ENCODE measurements at regions of chr1 and their contacts with region 1.

Region 1: DNA sequence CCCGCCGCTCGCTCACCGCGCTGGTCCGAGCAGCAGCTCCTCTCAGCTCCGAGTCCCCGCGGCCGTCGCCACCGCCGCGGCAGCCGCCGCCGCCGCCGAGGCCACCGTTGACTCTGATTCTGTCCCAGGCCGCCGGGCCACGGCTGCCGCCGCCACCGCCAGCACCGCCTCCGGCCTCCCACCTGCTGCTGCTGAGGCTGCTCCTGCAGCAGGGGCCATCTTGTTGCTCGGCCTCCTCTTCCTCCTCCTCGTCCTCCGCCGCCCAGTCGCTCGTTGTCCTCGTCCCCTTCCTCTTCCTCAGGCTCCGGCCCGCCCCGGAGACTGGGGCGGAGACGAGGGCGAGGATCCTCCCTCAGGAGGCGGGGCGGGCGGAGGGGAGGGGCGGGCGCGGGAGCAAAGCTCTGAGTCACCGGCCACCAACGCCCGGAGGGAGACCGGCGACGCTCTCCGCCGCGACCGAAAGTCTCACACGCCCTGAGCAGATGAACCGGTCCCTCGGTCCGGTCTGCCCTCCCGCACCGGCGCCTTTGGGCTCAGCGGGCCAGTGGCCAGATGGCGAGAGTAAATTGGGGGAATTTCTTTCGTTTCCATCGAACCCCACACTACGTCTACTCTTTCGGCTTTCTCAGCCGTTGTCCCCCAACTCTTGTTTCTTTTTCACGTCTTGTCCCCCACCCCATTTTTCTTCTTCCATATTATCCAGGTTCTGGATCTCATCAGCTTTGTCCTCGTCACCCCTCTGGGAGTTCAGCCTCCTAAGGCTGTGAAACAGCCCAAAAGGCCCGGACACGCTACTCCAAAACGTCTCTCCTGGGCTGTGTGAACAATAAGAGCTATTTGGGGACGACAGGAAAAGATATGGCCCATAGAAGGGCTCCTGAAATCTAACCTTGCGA is at the start of gene RC3H1:
- DNase-seq: peak; percentile 89 to 90
- ATAC-seq: peak; percentile 81 to 89
- H3K4me3 ChIP-seq: peak within 1 kb of the TSS; percentile 73 to 88 (median 82)
- H3K27ac ChIP-seq: peak within 1 kb of the TSS; percentile 94 to 98 (median 95)
- H3K4me1 ChIP-seq: peaks cover 29 to 44% of the 10 kb centered on the region in 2 donors
- H3K27me3 ChIP-seq: no peaks in the 10 kb centered on the region
- CTCF ChIP-seq: no peak
- POLR2A ChIP-seq: peak; percentile 91 to 94
- total RNA-seq, gene RC3H1: 17.6 to 88.9 (median 37.8) TPM

Region 2: GRCh38 chr1:173429471-173430402 is 592.6 kb before region 1 on chr1:
- in situ Hi-C with region 1: no loop called
- intact Hi-C with region 1: loop called (anchors 10 kb)
- DNase-seq: peak; percentile 63 to 75
- ATAC-seq: peak; percentile 76 to 80
- H3K4me3 ChIP-seq: peak overlapping the region; percentile 10 to 46 (median 40)
- H3K27ac ChIP-seq: peak overlapping the region; percentile 76 to 83 (median 82)
- H3K4me1 ChIP-seq: peaks cover 28 to 29% of the 10 kb centered on the region in 2 donors
- H3K27me3 ChIP-seq: no peaks in the 10 kb centered on the region
- CTCF ChIP-seq: peak; percentile 9 to 72 (median 58)
- POLR2A ChIP-seq: peak; percentile 11 to 18

Region 3: DNA sequence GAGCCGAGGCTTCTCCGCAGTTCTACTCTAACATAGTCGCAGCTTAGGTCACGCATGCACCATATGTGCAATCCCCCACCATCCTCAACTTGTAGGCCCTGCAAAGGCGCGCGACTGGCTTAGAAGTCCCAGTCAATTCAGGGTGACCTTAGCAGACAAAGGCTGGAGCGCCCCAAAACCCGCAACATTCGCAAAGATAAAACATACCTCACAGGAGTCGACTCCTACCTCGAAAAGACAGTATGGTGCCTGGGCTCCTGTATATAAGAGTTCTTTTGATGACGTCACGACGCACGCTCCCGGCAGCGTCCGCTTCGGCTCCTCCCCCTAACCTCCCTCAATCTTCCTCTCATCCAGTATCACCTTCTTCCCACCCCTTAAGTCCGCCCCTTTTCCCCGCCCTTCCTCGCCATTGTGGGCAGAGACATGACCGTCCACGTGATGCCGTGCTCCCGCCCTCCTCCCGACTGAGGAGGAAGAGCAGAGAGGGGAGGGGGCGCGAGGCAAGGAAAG is 154.5 kb before region 1 on chr1 and contains the start of gene GAS5:
- in situ Hi-C with region 1: no loop called
- intact Hi-C with region 1: loop called (anchors 1 kb)
- DNase-seq: peak; percentile 99
- ATAC-seq: peak; percentile 93 to 97
- H3K4me3 ChIP-seq: peak within 1 kb of the TSS; percentile 63 to 97 (median 85)
- H3K27ac ChIP-seq: peak within 1 kb of the TSS; percentile 90 to 96 (median 95)
- H3K4me1 ChIP-seq: peaks cover 27 to 30% of the 10 kb centered on the region in 2 donors
- H3K27me3 ChIP-seq: no peaks in the 10 kb centered on the region
- CTCF ChIP-seq: peak in 1 of 5 experiments; percentile 13
- POLR2A ChIP-seq: peak; percentile 93 to 97
- total RNA-seq, gene GAS5: 91.9 to 138 (median 98.4) TPM

Region 4: GRCh38 chr1:174060090-174060489 is 37.8 kb after region 1 on chr1:
- in situ Hi-C with region 1: no loop called
- intact Hi-C with region 1: no loop called
- DNase-seq: no peak
- ATAC-seq: no peak
- H3K4me3 ChIP-seq: no peak overlapping the region
- H3K27ac ChIP-seq: no peak overlapping the region
- H3K4me1 ChIP-seq: no peaks in the 10 kb centered on the region
- H3K27me3 ChIP-seq: no peaks in the 10 kb centered on the region
- CTCF ChIP-seq: no peak
- POLR2A ChIP-seq: no peak

Region 5: GRCh38 chr1:174159252-174160108 is 137.2 kb after region 1 on chr1 and contains the start of gene RABGAP1L:
- in situ Hi-C with region 1: no loop called
- intact Hi-C with region 1: loop called (anchors 1 kb)
- DNase-seq: peak; percentile 88 to 90
- ATAC-seq: peak; percentile 94
- H3K4me3 ChIP-seq: peak within 1 kb of the TSS; percentile 90 to 100 (median 93)
- H3K27ac ChIP-seq: peak within 1 kb of the TSS; percentile 92 to 98 (median 94)
- H3K4me1 ChIP-seq: peaks cover 3 to 11% of the 10 kb centered on the region in 2 donors
- H3K27me3 ChIP-seq: no peaks in the 10 kb centered on the region
- CTCF ChIP-seq: peak in 2 of 5 experiments; percentile 9 to 17
- POLR2A ChIP-seq: peak; percentile 73 to 79
- total RNA-seq, gene RABGAP1L: 8.8 to 22.2 (median 14.9) TPM

Region 6: DNA sequence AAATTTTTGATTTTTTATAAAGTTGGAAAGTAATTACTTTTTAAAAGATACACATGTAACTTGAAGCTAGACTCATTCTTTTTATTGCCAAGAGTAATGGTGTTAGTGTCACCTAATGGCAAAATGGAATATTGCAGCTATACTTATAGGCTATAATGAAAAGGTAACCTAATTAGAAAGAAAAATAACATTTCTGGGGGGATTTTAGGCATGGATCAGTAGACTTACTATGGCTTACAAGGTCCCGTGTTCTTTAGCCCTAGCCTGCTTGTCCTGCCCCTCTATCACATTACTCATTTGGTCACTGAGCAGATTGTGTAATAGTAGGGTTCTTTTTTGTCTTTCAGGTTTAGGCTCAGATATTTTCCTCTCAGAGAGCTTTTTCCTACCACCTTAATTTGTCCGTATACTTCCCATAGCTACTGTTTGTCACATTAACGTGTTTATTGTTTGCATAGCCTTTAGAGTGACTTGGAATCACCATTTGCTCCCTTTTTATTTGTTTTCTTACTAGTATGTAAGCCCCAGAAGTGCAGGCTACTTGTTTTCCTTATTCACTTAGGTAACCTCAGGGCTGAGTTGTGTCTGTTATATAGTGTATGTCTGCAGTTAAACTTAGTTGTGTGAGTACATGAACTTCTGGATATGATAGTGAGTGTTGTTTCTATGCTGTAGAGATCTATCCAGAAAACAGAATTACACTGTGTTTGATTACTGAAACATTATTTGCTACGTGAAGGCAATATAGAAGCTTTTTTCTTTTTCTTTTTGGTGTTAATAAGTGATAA is 195.7 kb after region 1 on chr1:
- in situ Hi-C with region 1: no loop called
- intact Hi-C with region 1: loop called (anchors 5 kb)
- DNase-seq: no peak
- ATAC-seq: peak; percentile 58 to 64
- H3K4me3 ChIP-seq: no peak overlapping the region
- H3K27ac ChIP-seq: no peak overlapping the region
- H3K4me1 ChIP-seq: peaks cover 0 to 8% of the 10 kb centered on the region in 2 donors
- H3K27me3 ChIP-seq: no peaks in the 10 kb centered on the region
- CTCF ChIP-seq: peak; percentile 44 to 78 (median 68)
- POLR2A ChIP-seq: no peak

Region 7: GRCh38 chr1:174999216-174999925 is 977.0 kb after region 1 on chr1:
- in situ Hi-C with region 1: no loop called
- intact Hi-C with region 1: loop called (anchors 10 kb)
- DNase-seq: peak; percentile 96 to 98
- ATAC-seq: peak; percentile 93 to 98
- H3K4me3 ChIP-seq: peak overlapping the region; percentile 72 to 83 (median 74)
- H3K27ac ChIP-seq: peak overlapping the region; percentile 94 to 97 (median 96)
- H3K4me1 ChIP-seq: peaks cover 17 to 24% of the 10 kb centered on the region in 2 donors
- H3K27me3 ChIP-seq: no peaks in the 10 kb centered on the region
- CTCF ChIP-seq: no peak
- POLR2A ChIP-seq: peak; percentile 86 to 91